Right ventricle myocardium inferior (tissue), 1 donor: ENCODE measurements at regions of chr7 and their contacts with region 1.

Region 1: DNA sequence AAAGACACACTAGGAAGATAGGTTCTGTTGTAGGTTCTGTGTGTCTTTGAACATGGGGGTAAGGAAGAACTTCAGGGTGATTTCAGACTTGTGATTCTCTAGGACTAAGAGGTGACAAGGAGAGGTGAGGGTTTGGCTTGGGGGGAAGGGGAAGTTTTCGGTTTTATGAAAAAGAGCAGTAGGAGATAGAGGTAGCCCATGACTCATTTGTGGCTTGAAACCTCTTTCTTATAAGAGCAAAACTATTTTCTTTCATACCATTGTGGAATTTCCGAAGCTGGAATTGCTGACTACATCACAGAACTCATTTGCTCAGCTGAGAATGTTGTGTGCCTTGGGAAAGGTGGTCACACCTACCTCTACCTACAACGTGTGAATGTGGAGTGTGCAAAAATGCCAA is 39.6 kb upstream of the IKZF1 start:
- DNase-seq: no peak
- ATAC-seq: no peak

Region 2: DNA sequence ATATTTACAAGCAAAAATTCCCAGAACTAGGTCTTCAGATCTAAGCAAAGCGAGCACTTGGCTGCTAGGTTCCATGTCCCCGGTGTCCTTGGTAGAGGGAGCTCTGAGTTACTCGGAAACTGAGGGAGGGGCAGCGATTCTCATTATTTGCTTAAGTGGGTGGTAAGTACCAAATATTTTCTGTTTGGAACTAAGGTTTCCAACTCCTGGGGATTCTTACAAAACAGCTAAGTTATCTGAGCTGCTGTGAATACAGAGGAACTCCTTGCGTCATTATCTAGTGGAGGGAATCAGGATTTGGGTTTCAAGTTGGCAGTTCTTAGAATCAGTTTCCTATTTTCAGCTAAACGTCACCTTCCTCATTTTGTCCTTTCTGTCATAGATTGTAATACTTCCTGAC is 37.2 kb before region 1 on chr7:
- intact Hi-C with region 1: loop called (anchors 2 kb)
- DNase-seq: no peak
- ATAC-seq: no peak